ENCODE measurements at regions of chr3 and their contacts with region 1.

Region 1: GRCh38 chr3:119681279-119681678 is 4.1 kb upstream of the COX17 start:
- DNase-seq: peak; percentile 40 to 71 (median 65)
- H3K4me3 ChIP-seq: no peak overlapping the region
- H3K27ac ChIP-seq: no peak overlapping the region
- H3K4me1 ChIP-seq: peaks cover 2 to 9% (median 6%) of the 10 kb centered on the region in 4 experiments
- H3K27me3 ChIP-seq: no peaks in the 10 kb centered on the region

Region 2: GRCh38 chr3:119524931-119525662 is 156.2 kb before region 1 on chr3:
- CTCF ChIA-PET with region 1: interaction called, 17 read pairs
- POLR2A ChIA-PET with region 1: no interaction called
- DNase-seq: peak; percentile 47 to 57 (median 56)
- H3K4me3 ChIP-seq: peak overlapping the region in 1 of 7 experiments; percentile 2
- H3K27ac ChIP-seq: no peak overlapping the region
- H3K4me1 ChIP-seq: peaks cover 0 to 3% (median 0%) of the 10 kb centered on the region in 4 experiments
- H3K27me3 ChIP-seq: no peaks in the 10 kb centered on the region

Region 3: DNA sequence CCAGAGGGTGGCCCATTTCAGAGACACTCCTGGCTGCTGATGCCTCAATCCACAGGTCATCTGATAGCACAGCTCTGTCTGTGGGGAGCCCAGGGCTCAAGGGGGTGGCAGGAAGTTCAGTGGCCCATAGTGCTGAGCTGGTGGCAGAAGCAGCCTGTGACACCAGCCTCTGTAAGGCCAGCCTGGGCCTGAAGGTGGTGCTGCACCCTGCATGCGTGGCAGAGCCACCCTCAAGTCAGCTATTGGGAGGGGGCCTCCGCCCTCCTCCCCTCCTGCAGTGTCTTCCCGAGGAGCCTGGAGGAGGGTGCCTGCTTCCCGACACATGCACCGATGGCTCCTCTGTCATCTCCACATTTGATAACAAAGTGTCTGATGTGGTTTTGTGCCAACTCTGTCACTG is 80.5 kb before region 1 on chr3:
- CTCF ChIA-PET with region 1: interaction called, 11 read pairs
- POLR2A ChIA-PET with region 1: no interaction called
- DNase-seq: peak; percentile 17 to 51 (median 50)
- H3K4me3 ChIP-seq: no peak overlapping the region
- H3K27ac ChIP-seq: no peak overlapping the region
- H3K4me1 ChIP-seq: peaks cover 0 to 17% (median 9%) of the 10 kb centered on the region in 4 experiments
- H3K27me3 ChIP-seq: no peaks in the 10 kb centered on the region